ENCODE measurements at regions of chr15 and their contacts with region 1.

Region 1: GRCh38 chr15:75453703-75454470 is 2.4 kb upstream of the SIN3A start:
- DNase-seq: peak; percentile 90

Region 2: GRCh38 chr15:75302318-75302717 is 151.6 kb before region 1 on chr15:
- CTCF ChIA-PET with region 1: no interaction called
- POLR2A ChIA-PET with region 1: no interaction called
- DNase-seq: no peak

Region 3: DNA sequence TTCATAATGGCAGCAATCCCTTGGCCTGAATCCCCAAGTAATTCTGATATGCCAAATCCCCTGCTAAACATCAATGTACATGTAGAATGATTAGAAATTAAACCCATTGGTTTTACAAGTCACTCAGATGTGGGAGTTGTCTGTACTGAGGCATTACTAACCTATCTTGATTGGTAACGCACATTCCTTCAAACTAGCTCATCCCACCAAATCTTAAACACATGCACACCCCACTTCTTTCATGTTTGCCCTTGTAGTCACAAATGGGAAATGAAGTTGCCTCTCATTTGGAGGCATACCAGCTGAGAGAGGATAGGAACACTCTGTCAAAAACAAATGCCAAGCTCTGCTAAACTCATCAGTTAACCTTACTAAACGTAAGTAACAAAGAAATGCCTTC is 56.4 kb before region 1 on chr15:
- CTCF ChIA-PET with region 1: no interaction called
- POLR2A ChIA-PET with region 1: interaction called, 31 read pairs
- DNase-seq: no peak

Region 4: GRCh38 chr15:75468913-75469598 is 15.2 kb after region 1 on chr15:
- CTCF ChIA-PET with region 1: interaction called, 4 read pairs
- POLR2A ChIA-PET with region 1: interaction called, 59 read pairs
- DNase-seq: no peak

Region 5: DNA sequence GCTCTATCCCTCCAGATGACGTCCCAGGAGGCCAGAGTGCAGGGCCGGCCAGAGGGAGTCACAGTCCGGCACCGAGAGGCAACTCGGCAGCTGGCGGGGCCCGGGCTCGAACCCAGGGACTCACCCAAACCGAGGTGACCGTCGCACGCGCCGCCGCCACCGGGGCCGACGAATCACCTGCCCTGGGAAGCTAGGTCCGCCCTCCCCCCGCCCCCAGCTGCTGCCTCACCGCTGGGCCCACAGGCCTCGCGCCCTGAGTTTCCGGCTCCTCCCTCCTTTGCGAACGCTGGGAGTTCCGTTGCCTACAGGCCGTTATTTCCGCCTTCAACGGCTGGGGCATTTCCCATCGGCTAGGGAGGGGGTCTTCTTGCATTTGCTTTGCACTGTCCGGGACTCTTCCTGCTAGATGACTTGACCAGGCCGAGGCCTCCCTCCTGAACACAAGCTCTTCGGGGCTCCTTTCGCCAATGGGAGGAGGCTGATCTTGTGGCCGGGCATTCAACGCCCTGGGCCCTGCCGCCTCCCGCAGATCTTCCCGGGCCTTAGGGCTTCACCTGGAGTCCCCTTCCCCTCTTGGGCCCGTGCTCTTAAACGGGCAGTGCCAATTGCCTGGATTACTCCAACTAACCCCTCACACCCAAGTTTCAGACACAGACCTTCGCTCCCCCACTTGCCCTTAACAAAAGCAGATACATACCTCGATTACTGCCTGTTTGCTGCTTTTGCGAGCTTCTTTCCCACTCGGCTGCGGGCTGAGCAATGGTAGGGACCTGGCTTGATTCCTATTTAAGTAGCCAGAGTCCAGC is 171.9 kb after region 1 on chr15 and contains the start of gene SNUPN:
- CTCF ChIA-PET with region 1: no interaction called
- POLR2A ChIA-PET with region 1: interaction called, 55 read pairs
- DNase-seq: peak; percentile 98

Region 6: GRCh38 chr15:75647370-75648155 is 193.7 kb after region 1 on chr15 and contains the start of gene SNX33:
- CTCF ChIA-PET with region 1: interaction called, 7 read pairs
- POLR2A ChIA-PET with region 1: interaction called, 99 read pairs
- DNase-seq: peak; percentile 78